K562 (cell line): ENCODE measurements at regions of chr11 and their contacts with region 1.

Region 1: DNA sequence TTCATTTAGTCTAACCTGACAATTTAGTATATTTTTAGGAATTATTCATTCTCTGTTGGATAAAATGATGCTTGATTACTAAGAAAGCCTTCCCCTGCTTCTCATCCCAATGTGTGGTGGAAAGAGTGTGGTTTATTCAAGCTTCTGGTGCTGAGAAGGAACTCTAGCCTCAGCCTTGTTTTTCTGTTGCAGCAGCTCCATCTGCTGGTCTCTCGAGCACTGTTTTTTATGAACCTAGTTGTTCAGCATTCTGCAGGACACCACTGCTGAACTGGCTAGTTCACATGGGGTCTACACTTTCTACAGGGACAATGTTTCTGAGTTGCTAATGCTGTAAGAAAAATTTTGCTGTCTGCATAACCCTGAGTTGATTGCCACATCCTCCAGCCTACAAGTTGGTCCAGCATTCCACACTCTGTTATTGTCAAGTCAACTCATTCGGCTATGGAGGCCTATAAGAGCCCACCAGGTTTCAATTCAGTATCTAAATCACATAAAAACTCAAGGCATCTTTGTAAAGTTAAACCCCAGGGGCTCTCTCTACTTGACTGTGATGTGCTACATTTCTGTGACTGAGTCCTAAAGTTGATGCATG is 14.3 kb downstream of the OR2AG2 start:
- DNase-seq: peak; percentile 24 to 76 (median 40)
- ATAC-seq: peak; percentile 95
- H3K4me3 ChIP-seq: no peak overlapping the region
- H3K27ac ChIP-seq: no peak overlapping the region
- H3K4me1 ChIP-seq: no peaks in the 10 kb centered on the region
- H3K27me3 ChIP-seq: no peaks in the 10 kb centered on the region
- CTCF ChIP-seq: peak; percentile 75 to 89 (median 84)
- EP300 ChIP-seq: no peak
- POLR2A ChIP-seq: no peak
- RAD21 ChIP-seq: peak; percentile 86 to 94

Region 2: GRCh38 chr11:6377902-6378639 is 379.4 kb before region 1 on chr11:
- CTCF ChIA-PET with region 1: interaction called, 10 read pairs
- POLR2A ChIA-PET with region 1: interaction called, 3 read pairs
- in situ Hi-C with region 1: no loop called
- intact Hi-C with region 1: loop called (anchors 5 kb)
- DNase-seq: no peak
- ATAC-seq: peak; percentile 62
- H3K4me3 ChIP-seq: no peak overlapping the region
- H3K27ac ChIP-seq: no peak overlapping the region
- H3K4me1 ChIP-seq: peaks cover 0 to 6% of the 10 kb centered on the region in 2 experiments; a peak in 2 of 5 replicates
- H3K27me3 ChIP-seq: peaks cover 15 to 23% of the 10 kb centered on the region in 2 experiments; a peak in 3 of 5 replicates
- CTCF ChIP-seq: no peak
- EP300 ChIP-seq: no peak
- POLR2A ChIP-seq: no peak
- RAD21 ChIP-seq: no peak

Region 3: GRCh38 chr11:6505577-6506240 is 251.8 kb before region 1 on chr11:
- CTCF ChIA-PET with region 1: no interaction called
- POLR2A ChIA-PET with region 1: no interaction called
- in situ Hi-C with region 1: no loop called
- intact Hi-C with region 1: loop called (anchors 1 kb)
- DNase-seq: peak; percentile 32 to 53 (median 34)
- ATAC-seq: peak; percentile 86
- H3K4me3 ChIP-seq: no peak overlapping the region
- H3K27ac ChIP-seq: no peak overlapping the region
- H3K4me1 ChIP-seq: no peaks in the 10 kb centered on the region
- H3K27me3 ChIP-seq: no peaks in the 10 kb centered on the region
- CTCF ChIP-seq: peak; percentile 61 to 78 (median 77); a peak in 5 of 6 replicates
- EP300 ChIP-seq: no peak
- POLR2A ChIP-seq: no peak
- RAD21 ChIP-seq: peak; percentile 46 to 69

Region 4: GRCh38 chr11:6705905-6706535 is 51.5 kb before region 1 on chr11:
- CTCF ChIA-PET with region 1: interaction called, 18 read pairs
- POLR2A ChIA-PET with region 1: interaction called, 3 read pairs
- in situ Hi-C with region 1: no loop called
- intact Hi-C with region 1: loop called (anchors 1 kb)
- DNase-seq: peak; percentile 54 to 64 (median 58)
- ATAC-seq: peak; percentile 78
- H3K4me3 ChIP-seq: no peak overlapping the region
- H3K27ac ChIP-seq: no peak overlapping the region
- H3K4me1 ChIP-seq: no peaks in the 10 kb centered on the region
- H3K27me3 ChIP-seq: no peaks in the 10 kb centered on the region
- CTCF ChIP-seq: peak; percentile 81 to 89 (median 81)
- EP300 ChIP-seq: no peak
- POLR2A ChIP-seq: no peak
- RAD21 ChIP-seq: peak; percentile 81 to 89

Region 5: DNA sequence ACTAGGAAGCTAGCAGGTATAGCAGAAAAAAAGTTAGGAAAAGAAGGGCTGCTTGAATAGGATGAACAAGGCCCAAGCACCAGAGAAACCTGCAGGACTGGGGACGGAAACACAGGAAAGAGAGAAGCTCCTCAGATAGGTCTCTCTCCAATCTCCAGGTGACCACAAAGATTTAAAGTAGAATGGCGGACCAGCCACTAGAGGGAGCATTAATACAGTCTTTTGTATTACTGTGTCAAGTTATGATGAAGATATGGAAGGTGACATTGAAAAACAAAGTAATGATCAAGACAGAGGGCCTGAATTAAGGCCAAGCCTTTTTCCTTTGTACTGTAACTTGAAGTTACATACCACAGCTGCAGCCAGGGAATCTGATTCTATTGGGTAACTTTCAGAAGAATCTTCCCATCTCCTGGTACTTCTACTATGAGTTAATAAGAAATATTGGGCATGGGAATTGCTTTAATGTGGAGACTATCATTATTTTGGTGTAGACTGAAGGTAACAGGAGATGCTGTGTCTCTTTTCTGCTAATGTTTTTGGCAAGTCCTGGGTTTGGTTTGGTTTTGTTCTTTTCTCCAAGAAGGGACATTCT is 19.5 kb before region 1 on chr11:
- CTCF ChIA-PET with region 1: interaction called, 13 read pairs
- POLR2A ChIA-PET with region 1: no interaction called
- in situ Hi-C with region 1: no loop called
- intact Hi-C with region 1: loop called (anchors 1 kb)
- DNase-seq: peak; percentile 51 to 80 (median 58)
- ATAC-seq: peak; percentile 97
- H3K4me3 ChIP-seq: no peak overlapping the region
- H3K27ac ChIP-seq: no peak overlapping the region
- H3K4me1 ChIP-seq: peaks cover 0 to 1% of the 10 kb centered on the region in 2 experiments; a peak in 2 of 5 replicates
- H3K27me3 ChIP-seq: no peaks in the 10 kb centered on the region
- CTCF ChIP-seq: peak; percentile 70 to 84 (median 80); a peak in 5 of 6 replicates
- EP300 ChIP-seq: no peak
- POLR2A ChIP-seq: no peak
- RAD21 ChIP-seq: peak; percentile 62 to 91

Region 6: GRCh38 chr11:6746086-6746618 is 11.3 kb before region 1 on chr11:
- CTCF ChIA-PET with region 1: no interaction called
- POLR2A ChIA-PET with region 1: interaction called, 10 read pairs
- in situ Hi-C with region 1: no loop called
- intact Hi-C with region 1: no loop called
- DNase-seq: no peak
- ATAC-seq: peak; percentile 49
- H3K4me3 ChIP-seq: no peak overlapping the region
- H3K27ac ChIP-seq: peak overlapping the region; percentile 72
- H3K4me1 ChIP-seq: peaks cover 0 to 50% of the 10 kb centered on the region in 2 experiments
- H3K27me3 ChIP-seq: no peaks in the 10 kb centered on the region
- CTCF ChIP-seq: no peak
- EP300 ChIP-seq: no peak
- POLR2A ChIP-seq: no peak
- RAD21 ChIP-seq: no peak

Region 7: GRCh38 chr11:6856871-6857270 is 99.4 kb after region 1 on chr11:
- CTCF ChIA-PET with region 1: no interaction called
- POLR2A ChIA-PET with region 1: no interaction called
- in situ Hi-C with region 1: no loop called
- intact Hi-C with region 1: no loop called
- DNase-seq: no peak
- ATAC-seq: no peak
- H3K4me3 ChIP-seq: no peak overlapping the region
- H3K27ac ChIP-seq: no peak overlapping the region
- H3K4me1 ChIP-seq: no peaks in the 10 kb centered on the region
- H3K27me3 ChIP-seq: no peaks in the 10 kb centered on the region
- CTCF ChIP-seq: no peak
- EP300 ChIP-seq: no peak
- POLR2A ChIP-seq: no peak
- RAD21 ChIP-seq: no peak